Breast epithelium (tissue), 4 donors: ENCODE measurements at regions of chr18 and their contacts with region 1.

Region 1: GRCh38 chr18:35167857-35168256 is 73.0 kb upstream of the ZNF397 start:
- DNase-seq: no peak
- H3K4me3 ChIP-seq: no peak overlapping the region
- H3K27ac ChIP-seq: no peak overlapping the region
- H3K4me1 ChIP-seq: peaks cover 0 to 3% of the 10 kb centered on the region in 2 donors
- H3K27me3 ChIP-seq: no peaks in the 10 kb centered on the region
- CTCF ChIP-seq: no peak
- POLR2A ChIP-seq: no peak

Region 2: GRCh38 chr18:34055227-34055626 is 1112.6 kb before region 1 on chr18:
- intact Hi-C with region 1: loop called (anchors 5 kb)
- DNase-seq: no peak
- H3K4me3 ChIP-seq: no peak overlapping the region
- H3K27ac ChIP-seq: no peak overlapping the region
- H3K4me1 ChIP-seq: no peaks in the 10 kb centered on the region
- H3K27me3 ChIP-seq: no peaks in the 10 kb centered on the region
- CTCF ChIP-seq: no peak
- POLR2A ChIP-seq: no peak